ENCODE measurements at regions of chr10 and their contacts with region 1.

Region 1: GRCh38 chr10:118850418-118851061 is 95.8 kb upstream of the CACUL1 start:
- DNase-seq: peak; percentile 74
- H3K4me3 Mint-ChIP-seq: no peak overlapping the region
- H3K27ac Mint-ChIP-seq: no peak overlapping the region
- H3K4me1 Mint-ChIP-seq: no peaks in the 10 kb centered on the region
- H3K27me3 Mint-ChIP-seq: no peaks in the 10 kb centered on the region
- CTCF ChIP-seq: peak; percentile 41

Region 2: DNA sequence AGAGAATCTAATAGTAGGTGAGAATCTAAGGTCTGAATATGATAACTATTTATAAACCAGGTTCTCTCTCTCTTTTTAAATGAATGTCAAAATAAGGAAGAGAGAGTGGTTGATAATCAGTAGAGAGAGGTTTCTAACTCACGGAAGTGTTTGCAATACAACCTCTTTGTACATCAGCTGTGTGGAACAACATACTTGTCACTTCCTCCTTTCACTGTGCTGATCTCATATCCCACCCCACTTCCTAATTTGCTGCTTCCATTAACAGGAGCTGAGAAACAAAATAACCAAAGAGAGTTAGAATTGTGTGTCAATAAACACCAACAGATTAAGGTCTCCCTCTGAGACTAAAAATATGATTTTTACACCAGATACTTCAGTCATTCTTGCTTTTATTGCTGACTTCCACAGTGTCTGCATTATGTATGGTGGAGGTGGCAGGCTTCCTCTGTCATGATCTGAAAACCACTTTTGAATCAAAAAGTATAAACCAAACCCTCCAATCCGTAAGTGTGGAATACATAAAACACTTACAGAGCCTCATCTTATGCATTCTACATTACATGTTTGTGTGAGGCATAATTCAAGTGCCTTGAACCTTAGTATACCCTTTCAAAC is 120.8 kb before region 1 on chr10:
- CTCF ChIA-PET with region 1: no interaction called
- intact Hi-C with region 1: loop called (anchors 5 kb)
- DNase-seq: no peak
- H3K4me3 Mint-ChIP-seq: no peak overlapping the region
- H3K27ac Mint-ChIP-seq: peak overlapping the region; percentile 50
- H3K4me1 Mint-ChIP-seq: peaks cover 52% of the 10 kb centered on the region
- H3K27me3 Mint-ChIP-seq: no peaks in the 10 kb centered on the region
- CTCF ChIP-seq: no peak

Region 3: GRCh38 chr10:118754720-118755480 is 95.6 kb before region 1 on chr10 and contains the start of gene CACUL1:
- CTCF ChIA-PET with region 1: no interaction called
- intact Hi-C with region 1: no loop called
- DNase-seq: peak; percentile 98
- H3K4me3 Mint-ChIP-seq: peak within 1 kb of the TSS; percentile 82
- H3K27ac Mint-ChIP-seq: peak within 1 kb of the TSS; percentile 88
- H3K4me1 Mint-ChIP-seq: peaks cover 16% of the 10 kb centered on the region
- H3K27me3 Mint-ChIP-seq: no peaks in the 10 kb centered on the region
- CTCF ChIP-seq: no peak
- total RNA-seq, gene CACUL1: 38.3 and 44.6 TPM in 2 replicates

Region 4: GRCh38 chr10:119006451-119007210 is 156.1 kb after region 1 on chr10:
- CTCF ChIA-PET with region 1: no interaction called
- intact Hi-C with region 1: loop called (anchors 10 kb)
- DNase-seq: peak; percentile 49
- H3K4me3 Mint-ChIP-seq: no peak overlapping the region
- H3K27ac Mint-ChIP-seq: no peak overlapping the region
- H3K4me1 Mint-ChIP-seq: peaks cover 11% of the 10 kb centered on the region
- H3K27me3 Mint-ChIP-seq: no peaks in the 10 kb centered on the region
- CTCF ChIP-seq: no peak

Region 5: GRCh38 chr10:119235356-119235755 is 384.8 kb after region 1 on chr10:
- CTCF ChIA-PET with region 1: no interaction called
- intact Hi-C with region 1: no loop called
- DNase-seq: no peak
- H3K4me3 Mint-ChIP-seq: no peak overlapping the region
- H3K27ac Mint-ChIP-seq: no peak overlapping the region
- H3K4me1 Mint-ChIP-seq: peaks cover 14% of the 10 kb centered on the region
- H3K27me3 Mint-ChIP-seq: no peaks in the 10 kb centered on the region
- CTCF ChIP-seq: no peak

Measured in Calu3 (cell line).